AG04450 (cell line): ENCODE measurements at regions of chr17 and their contacts with region 1.

Region 1: DNA sequence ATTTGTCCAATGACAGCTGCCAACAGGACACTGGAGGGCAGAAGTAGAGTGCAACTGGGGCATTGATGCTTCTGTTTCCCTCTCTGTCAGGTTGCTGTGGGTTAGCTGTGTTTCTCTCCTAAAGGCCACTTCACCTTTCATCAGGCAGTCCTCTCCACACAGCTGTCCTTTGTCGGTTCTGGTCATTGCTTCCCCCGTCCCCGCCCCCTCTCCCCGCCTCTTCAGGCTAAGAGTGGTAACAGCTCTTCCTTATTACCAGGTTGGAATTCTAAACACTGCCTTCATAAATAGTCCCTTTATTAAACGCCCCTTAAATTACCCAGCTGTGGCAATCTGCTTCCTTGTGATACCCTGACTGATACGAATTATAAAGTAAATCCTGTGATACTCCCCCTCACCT is 31.8 kb upstream of the NSRP1 start:
- DNase-seq: no peak
- H3K4me3 ChIP-seq: no peak overlapping the region
- H3K27ac ChIP-seq: no peak overlapping the region
- H3K27me3 ChIP-seq: peaks cover 15% of the 10 kb centered on the region
- CTCF ChIP-seq: no peak

Region 2: DNA sequence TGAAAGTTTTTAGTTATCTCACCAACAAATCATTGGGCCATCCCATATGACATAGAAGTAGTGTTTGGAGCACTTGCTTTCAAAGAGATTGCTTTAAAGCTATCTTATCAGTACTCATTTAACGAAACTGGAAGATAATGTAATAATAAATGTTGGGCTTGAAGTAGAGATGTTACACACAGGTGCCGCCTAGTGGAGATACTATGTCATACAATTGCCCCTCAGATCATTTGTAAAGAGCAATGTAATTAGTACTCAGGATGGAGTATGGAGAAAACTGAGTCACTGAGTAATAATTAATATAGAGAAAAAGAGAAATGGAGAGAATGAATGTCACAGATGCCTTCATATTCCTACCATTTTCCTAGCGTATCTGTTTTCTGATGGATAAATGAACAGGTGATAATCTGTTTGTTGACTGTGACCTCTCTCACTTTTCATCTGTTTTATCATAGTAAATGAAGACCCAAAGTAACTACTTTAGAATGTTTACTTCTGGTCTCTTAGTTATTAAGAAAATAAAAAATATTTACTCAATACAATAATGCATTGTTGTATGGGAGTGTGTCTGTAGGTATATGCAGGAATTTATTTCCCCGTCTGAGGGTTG is 63.0 kb before region 1 on chr17:
- CTCF ChIA-PET with region 1: interaction called, 12 read pairs
- POLR2A ChIA-PET with region 1: no interaction called
- DNase-seq: peak; percentile 13
- H3K4me3 ChIP-seq: no peak overlapping the region
- H3K27ac ChIP-seq: no peak overlapping the region
- H3K27me3 ChIP-seq: no peaks in the 10 kb centered on the region
- CTCF ChIP-seq: peak; percentile 87

Region 3: GRCh38 chr17:30236766-30237165 is 152.0 kb after region 1 on chr17:
- CTCF ChIA-PET with region 1: no interaction called
- POLR2A ChIA-PET with region 1: no interaction called
- DNase-seq: no peak
- H3K4me3 ChIP-seq: no peak overlapping the region
- H3K27ac ChIP-seq: no peak overlapping the region
- H3K27me3 ChIP-seq: peaks cover 70% of the 10 kb centered on the region
- CTCF ChIP-seq: peak; percentile 29; the same call in 1 of the 2 replicates